ENCODE measurements at regions of chr12 and their contacts with region 1.

Region 1: DNA sequence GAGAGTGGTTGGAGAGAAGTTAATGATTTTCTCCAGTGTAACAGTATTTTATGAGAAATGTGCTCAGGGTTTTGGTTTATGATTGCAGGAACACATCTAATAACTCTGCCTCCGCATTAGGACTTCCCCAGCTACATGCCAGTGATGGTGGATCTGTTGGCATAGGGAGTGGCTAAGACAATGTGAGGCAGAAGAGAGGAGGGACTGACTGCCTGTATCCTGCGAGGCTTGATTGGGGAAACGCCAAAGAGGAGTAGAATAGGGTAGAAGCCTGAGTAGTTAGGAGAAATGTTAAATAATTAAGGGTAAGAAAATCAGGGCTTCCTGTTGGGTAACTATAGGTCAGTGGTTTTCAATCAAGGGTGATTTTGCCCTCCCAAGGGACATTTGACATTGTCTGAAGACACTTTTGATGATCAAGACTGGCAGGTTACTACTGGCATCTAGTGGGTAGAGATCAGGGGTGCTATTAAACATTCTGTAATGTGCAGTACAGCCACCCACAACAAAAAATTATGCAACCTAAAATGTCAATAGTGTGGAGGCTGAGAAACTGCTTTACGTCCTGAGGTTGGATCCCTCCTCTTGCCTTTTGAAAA is 12.8 kb downstream of the TDG start:
- DNase-seq: no peak
- ATAC-seq: peak; percentile 90
- H3K4me3 Mint-ChIP-seq: no peak overlapping the region
- H3K27ac Mint-ChIP-seq: no peak overlapping the region
- H3K4me1 Mint-ChIP-seq: peaks cover 22% of the 10 kb centered on the region
- H3K27me3 Mint-ChIP-seq: no peaks in the 10 kb centered on the region
- CTCF ChIP-seq: no peak

Region 2: GRCh38 chr12:103771466-103771865 is 207.0 kb before region 1 on chr12:
- CTCF ChIA-PET with region 1: no interaction called
- POLR2A ChIA-PET with region 1: no interaction called
- intact Hi-C with region 1: loop called (anchors 5 kb)
- DNase-seq: no peak
- ATAC-seq: no peak
- H3K4me3 Mint-ChIP-seq: no peak overlapping the region
- H3K27ac Mint-ChIP-seq: no peak overlapping the region
- H3K4me1 Mint-ChIP-seq: no peaks in the 10 kb centered on the region
- H3K27me3 Mint-ChIP-seq: no peaks in the 10 kb centered on the region
- CTCF ChIP-seq: no peak

Region 3: GRCh38 chr12:103884316-103884715 is 94.2 kb before region 1 on chr12:
- CTCF ChIA-PET with region 1: interaction called, 3 read pairs
- POLR2A ChIA-PET with region 1: no interaction called
- intact Hi-C with region 1: loop called (anchors 1 kb)
- DNase-seq: no peak
- ATAC-seq: no peak
- H3K4me3 Mint-ChIP-seq: no peak overlapping the region
- H3K27ac Mint-ChIP-seq: no peak overlapping the region
- H3K4me1 Mint-ChIP-seq: peaks cover 17% of the 10 kb centered on the region
- H3K27me3 Mint-ChIP-seq: no peaks in the 10 kb centered on the region
- CTCF ChIP-seq: no peak

Region 4: DNA sequence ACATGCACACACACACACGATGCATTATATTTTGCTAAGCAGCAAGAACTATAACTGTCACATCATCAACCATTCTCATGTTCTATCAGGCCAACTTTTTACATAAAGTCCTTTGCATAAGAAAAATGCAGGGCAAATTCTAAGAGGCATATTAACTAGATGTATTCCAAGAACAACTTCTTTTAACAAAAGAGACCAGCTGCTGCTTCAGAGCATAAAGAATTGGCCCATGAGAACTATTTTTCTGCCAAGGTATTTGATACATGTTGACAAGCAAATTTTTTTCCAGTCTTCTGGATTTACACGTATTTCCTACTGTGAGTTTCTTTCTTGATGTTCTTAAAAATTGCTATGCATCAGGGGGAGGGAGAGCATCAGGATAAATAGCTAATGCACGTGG is 44.3 kb after region 1 on chr12:
- CTCF ChIA-PET with region 1: no interaction called
- POLR2A ChIA-PET with region 1: no interaction called
- intact Hi-C with region 1: no loop called
- DNase-seq: no peak
- ATAC-seq: no peak
- H3K4me3 Mint-ChIP-seq: no peak overlapping the region
- H3K27ac Mint-ChIP-seq: no peak overlapping the region
- H3K4me1 Mint-ChIP-seq: no peaks in the 10 kb centered on the region
- H3K27me3 Mint-ChIP-seq: peaks cover 11% of the 10 kb centered on the region
- CTCF ChIP-seq: no peak

Measured in activated B cell treated with CpG ODN at 0.5 μM for 24 hours (primary cell).